A549 (cell line): ENCODE measurements at regions of chr3 and their contacts with region 1.

Region 1: GRCh38 chr3:15647611-15648167 is 46.1 kb downstream of the BTD start:
- DNase-seq: no peak
- ATAC-seq: no peak
- H3K4me3 ChIP-seq: no peak overlapping the region
- H3K27ac ChIP-seq: peak overlapping the region; percentile 82 to 88
- H3K4me1 ChIP-seq: peaks cover 31% of the 10 kb centered on the region
- CTCF ChIP-seq: no peak
- EP300 ChIP-seq: no peak
- POLR2A ChIP-seq: no peak
- RAD21 ChIP-seq: no peak

Region 2: DNA sequence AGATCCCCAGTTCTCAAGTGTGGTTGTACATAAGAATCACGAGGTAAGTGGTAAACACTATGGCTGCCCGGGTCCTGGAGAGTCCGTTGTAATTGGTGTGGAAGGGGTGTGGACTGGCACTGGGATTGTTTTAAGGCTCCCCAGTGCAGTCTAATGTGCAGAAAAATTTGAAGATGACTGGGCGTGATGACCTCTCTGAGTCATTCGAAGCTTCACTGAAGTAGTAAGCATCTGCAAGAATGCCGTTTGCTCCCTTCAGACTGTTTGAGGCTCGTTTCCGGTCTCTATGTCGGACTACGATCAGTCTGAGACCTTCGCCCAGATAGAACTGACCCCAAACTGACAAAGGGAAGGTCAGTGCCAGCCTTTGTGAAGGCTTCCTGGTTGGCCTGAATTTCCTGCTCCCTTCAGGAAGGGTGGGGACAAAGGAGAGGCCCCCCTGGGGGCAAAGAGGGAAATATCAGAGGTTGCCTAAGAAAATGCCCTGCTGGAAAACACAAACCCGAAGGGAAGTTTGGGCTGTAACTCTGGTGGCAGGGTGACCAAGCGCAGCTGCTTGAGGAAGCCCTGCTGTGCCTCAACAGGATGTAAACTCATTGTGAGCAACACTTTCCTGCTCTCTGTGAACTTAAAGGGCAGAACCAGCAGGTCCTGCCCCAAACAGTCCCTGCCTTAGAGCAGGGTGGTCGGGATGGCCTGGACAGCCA is 11.5 kb before region 1 on chr3:
- CTCF ChIA-PET with region 1: interaction called, 27 read pairs
- POLR2A ChIA-PET with region 1: interaction called, 11 read pairs
- DNase-seq: peak; percentile 58 to 78
- ATAC-seq: peak; percentile 81 to 82
- H3K4me3 ChIP-seq: no peak overlapping the region
- H3K27ac ChIP-seq: peak overlapping the region; percentile 75 to 95
- H3K4me1 ChIP-seq: peaks cover 81% of the 10 kb centered on the region
- CTCF ChIP-seq: no peak
- EP300 ChIP-seq: peak; percentile 10 to 18; a peak in 1 of 5 replicates
- POLR2A ChIP-seq: no peak
- RAD21 ChIP-seq: no peak; a peak in 1 of 5 replicates

Region 3: DNA sequence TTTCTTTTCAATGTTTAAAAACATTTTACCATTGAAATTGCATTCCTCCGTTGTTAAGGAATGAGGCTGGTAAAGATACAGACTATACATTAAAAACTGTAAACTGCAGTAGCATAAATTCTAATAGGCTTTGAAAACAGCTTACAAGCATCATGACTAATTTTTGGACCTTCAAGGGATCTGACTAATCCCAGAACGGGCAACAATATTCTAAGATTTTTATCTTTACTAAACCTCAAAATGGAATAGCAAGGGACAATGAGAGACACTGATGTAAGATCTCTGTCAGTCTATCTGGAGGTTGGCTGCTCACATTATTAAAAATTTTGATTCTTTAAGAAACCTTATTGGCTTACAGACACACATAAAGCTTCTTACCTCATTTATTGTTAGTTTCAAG is 28.6 kb after region 1 on chr3:
- CTCF ChIA-PET with region 1: no interaction called
- POLR2A ChIA-PET with region 1: no interaction called
- DNase-seq: no peak
- ATAC-seq: no peak
- H3K4me3 ChIP-seq: no peak overlapping the region
- H3K27ac ChIP-seq: no peak overlapping the region
- H3K4me1 ChIP-seq: 0 out of 3 replicates have a peak, but pooled peaks cover 4% of the 10 kb centered on the region
- CTCF ChIP-seq: no peak
- EP300 ChIP-seq: no peak
- POLR2A ChIP-seq: no peak
- RAD21 ChIP-seq: no peak